ENCODE measurements at regions of chr3 and their contacts with region 1.

Region 1: DNA sequence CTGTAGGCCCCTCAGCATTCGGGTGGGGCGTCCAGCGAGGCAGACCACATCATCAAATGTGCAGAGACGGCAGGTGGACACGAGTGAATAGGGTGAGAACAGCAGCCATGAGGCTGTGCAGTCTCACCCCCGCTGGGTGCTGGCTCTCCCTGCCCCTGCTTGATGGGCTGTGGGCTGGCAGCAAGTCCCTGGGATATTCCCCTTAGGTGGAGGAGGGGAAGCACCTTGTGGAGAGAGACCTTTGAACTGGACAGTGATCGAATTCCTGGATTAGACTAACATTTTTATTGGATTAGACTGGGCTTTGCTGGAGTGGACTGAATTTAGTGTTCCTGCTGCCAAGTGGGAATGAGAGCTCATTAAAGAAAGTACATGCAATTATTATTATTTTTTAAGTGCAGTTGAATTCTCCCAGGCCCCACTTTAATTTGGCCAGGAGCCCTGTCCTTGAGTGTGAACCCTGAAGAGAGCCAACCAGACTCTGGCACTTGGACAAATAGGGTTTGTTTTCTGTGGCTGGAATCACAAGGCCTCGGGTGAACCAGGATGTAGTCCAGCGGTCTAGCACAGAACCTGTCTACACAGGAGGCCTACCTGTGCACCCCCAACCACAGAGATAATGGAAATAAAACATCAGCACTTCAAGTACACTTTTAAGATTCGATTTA is 193.1 kb downstream of the ABHD5 start:
- DNase-seq: no peak

Region 2: GRCh38 chr3:43769471-43770425 is 114.1 kb before region 1 on chr3:
- intact Hi-C with region 1: loop called in 1 of 2 experiments (anchors 10 kb)
- DNase-seq: peak; percentile 99

Region 3: DNA sequence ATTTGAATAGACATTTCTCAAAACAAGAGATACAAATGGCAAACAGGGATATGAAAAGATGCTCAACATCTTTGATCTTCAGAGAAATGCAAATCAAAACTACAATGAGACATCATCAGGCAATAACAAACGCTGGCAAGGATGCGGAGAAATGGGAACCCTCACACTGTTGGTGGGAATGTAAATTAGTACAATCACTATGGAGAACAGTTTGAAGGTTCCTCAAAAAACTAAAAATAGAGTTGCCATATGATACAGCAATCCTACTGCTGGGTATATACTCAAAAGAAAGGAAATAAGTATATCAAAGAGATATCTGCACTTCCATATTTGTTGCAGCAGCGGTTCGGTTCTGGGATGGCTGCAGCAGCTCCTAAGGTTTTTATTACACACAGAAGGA is 1487.8 kb after region 1 on chr3:
- intact Hi-C with region 1: loop called in 1 of 2 experiments (anchors 5 kb)
- DNase-seq: no peak

Measured in posterior vena cava (tissue), 2 donors.